Activated CD4-positive, alpha-beta T cell treated with anti-CD3 and anti-CD28 coated beads for 36 hours (primary cell): ENCODE measurements at regions of chr14 and their contacts with region 1.

Region 1: GRCh38 chr14:71555654-71556559 is 376.3 kb upstream of the RGS6 start:
- DNase-seq: peak; percentile 81
- ATAC-seq: peak; percentile 86
- H3K4me3 Mint-ChIP-seq: peak overlapping the region; percentile 50
- H3K27ac Mint-ChIP-seq: peak overlapping the region; percentile 98
- H3K4me1 Mint-ChIP-seq: peaks cover 76% of the 10 kb centered on the region
- H3K27me3 Mint-ChIP-seq: no peaks in the 10 kb centered on the region

Region 2: DNA sequence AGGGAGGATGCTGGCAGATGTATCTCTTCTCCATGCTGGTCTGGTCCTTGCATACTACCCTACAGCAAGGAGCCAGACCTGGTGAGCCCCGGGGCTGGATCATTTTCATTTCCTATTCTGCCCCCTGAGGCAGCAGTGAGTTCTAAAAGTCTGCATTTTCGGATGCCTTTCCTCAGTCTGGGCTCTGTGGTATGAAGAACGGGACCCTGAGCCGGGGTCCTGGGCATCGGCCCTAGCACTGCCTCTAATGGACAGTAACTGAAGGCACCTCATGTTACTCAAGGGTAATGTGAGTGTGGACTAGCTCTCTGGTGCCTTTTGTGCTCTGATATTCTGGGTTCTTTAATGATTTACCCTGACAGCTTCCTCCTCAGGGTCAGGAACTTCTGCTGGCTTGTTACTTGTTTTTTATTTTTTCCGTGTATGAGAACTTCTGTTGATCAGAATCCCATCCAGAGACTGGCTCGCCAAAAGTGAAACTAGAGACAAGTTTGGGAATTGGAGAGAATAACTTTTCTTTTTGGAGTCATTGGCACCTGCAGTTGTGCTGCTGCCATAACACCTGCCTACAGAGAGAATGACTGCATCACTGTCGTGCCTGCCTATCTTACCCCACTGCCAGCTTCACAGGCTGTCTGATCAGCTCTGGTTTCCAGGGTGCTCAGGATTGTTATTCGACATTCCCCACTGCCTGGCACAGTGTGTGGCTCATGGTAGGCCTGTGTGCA is 1882.2 kb before region 1 on chr14:
- CTCF ChIA-PET with region 1: no interaction called
- POLR2A ChIA-PET with region 1: no interaction called
- intact Hi-C with region 1: loop called in 1 of 2 experiments (anchors 10 kb)
- DNase-seq: peak; percentile 40
- ATAC-seq: no peak
- H3K4me3 Mint-ChIP-seq: peak overlapping the region; percentile 60
- H3K27ac Mint-ChIP-seq: peak overlapping the region; percentile 99
- H3K4me1 Mint-ChIP-seq: peaks cover 95% of the 10 kb centered on the region
- H3K27me3 Mint-ChIP-seq: no peaks in the 10 kb centered on the region

Region 3: GRCh38 chr14:71203306-71203705 is 352.6 kb before region 1 on chr14:
- CTCF ChIA-PET with region 1: no interaction called
- POLR2A ChIA-PET with region 1: no interaction called
- intact Hi-C with region 1: no loop called
- DNase-seq: no peak
- ATAC-seq: no peak
- H3K4me3 Mint-ChIP-seq: no peak overlapping the region
- H3K27ac Mint-ChIP-seq: no peak overlapping the region
- H3K4me1 Mint-ChIP-seq: peaks cover 2% of the 10 kb centered on the region
- H3K27me3 Mint-ChIP-seq: peaks cover 8% of the 10 kb centered on the region

Region 4: DNA sequence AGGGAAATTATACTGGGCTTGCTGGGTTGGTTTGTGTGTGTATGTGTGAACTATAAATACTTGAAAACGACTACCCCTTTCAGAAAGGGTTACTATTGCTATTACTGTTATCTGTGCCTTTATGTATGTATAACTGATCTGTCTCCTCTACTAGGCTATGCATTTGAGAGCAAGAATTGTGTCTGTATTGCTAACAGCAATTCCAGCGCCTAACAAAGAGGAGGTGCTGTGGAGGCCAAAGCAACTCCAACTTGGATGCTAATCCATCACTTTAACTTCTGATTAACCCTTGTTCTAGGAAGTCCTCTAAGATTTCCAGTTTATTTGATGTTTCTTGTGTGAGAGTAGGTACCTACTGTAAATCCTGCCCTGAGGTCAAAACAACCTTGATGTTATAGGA is 334.8 kb before region 1 on chr14:
- CTCF ChIA-PET with region 1: no interaction called
- POLR2A ChIA-PET with region 1: no interaction called
- intact Hi-C with region 1: loop called in 1 of 2 experiments (anchors 1 kb)
- DNase-seq: no peak
- ATAC-seq: no peak
- H3K4me3 Mint-ChIP-seq: no peak overlapping the region
- H3K27ac Mint-ChIP-seq: no peak overlapping the region
- H3K4me1 Mint-ChIP-seq: peaks cover 15% of the 10 kb centered on the region
- H3K27me3 Mint-ChIP-seq: no peaks in the 10 kb centered on the region

Region 5: DNA sequence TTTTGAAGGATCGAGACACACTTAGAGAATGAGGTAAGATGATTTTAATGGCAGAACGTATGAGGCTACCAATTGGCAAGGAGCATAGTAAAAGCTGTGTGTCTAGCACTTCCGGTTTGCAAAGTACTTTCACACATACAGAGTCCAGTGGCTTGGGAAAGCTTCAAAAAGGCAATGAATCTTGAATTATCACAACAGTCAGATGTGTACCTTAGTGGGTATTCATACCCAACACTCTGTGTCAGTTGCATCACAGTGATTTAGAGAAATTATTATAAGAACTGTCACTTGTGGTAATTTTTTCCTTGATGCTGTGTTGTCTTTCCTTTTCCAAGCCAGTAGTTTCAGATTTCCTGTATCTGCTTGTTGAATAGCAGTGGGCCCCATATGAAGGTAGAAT is 224.5 kb before region 1 on chr14:
- CTCF ChIA-PET with region 1: no interaction called
- POLR2A ChIA-PET with region 1: interaction called, 6 read pairs
- intact Hi-C with region 1: loop called in 1 of 2 experiments (anchors 1 kb)
- DNase-seq: no peak
- ATAC-seq: peak; percentile 17
- H3K4me3 Mint-ChIP-seq: no peak overlapping the region
- H3K27ac Mint-ChIP-seq: peak overlapping the region; percentile 69
- H3K4me1 Mint-ChIP-seq: peaks cover 70% of the 10 kb centered on the region
- H3K27me3 Mint-ChIP-seq: no peaks in the 10 kb centered on the region

Region 6: DNA sequence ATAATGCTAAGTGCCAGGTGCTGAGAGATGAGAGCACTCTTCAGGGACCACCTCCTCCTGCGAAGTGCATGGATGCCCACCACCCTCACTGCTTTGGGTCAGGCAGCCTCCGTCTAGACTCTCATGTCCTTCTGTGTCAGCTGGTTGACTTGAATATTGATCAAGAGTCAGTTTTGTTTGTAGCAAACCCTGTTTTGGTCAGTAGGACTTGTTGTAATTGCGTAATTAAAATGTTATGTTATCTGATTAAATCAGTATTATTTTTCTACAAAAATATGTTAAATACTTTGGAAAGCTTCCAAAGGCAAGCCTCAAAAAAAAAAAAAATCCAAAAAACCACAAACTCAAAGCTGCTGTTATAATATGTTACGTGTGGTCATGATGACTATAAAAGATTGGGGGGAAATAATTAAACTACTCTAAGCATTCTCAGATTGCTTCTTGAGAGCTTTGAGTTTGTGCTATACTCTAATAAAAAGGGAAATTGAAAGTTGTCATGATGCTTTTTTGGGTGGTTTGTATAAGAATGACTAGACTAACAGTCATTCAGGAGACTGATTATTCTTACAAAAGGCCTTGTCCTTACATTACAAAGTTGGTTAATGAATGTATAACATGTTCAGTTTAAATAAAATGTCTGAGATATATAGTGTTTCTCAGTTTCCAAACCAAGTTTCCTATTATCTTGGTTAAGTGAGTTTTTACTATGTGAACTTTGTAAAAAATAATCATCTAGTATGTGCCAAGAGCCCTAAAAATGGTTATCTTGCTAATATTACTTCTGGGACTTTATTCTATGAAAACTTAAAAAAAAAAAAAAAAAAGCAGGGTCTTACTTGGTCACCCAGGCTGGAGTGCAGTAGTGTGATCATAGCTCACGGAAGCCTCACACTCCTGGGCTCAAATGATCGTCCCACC is 83.6 kb before region 1 on chr14:
- CTCF ChIA-PET with region 1: interaction called, 4 read pairs
- POLR2A ChIA-PET with region 1: no interaction called
- intact Hi-C with region 1: loop called (anchors 1 kb)
- DNase-seq: no peak
- ATAC-seq: peak; percentile 79
- H3K4me3 Mint-ChIP-seq: no peak overlapping the region
- H3K27ac Mint-ChIP-seq: no peak overlapping the region
- H3K4me1 Mint-ChIP-seq: peaks cover 41% of the 10 kb centered on the region
- H3K27me3 Mint-ChIP-seq: no peaks in the 10 kb centered on the region

Region 7: DNA sequence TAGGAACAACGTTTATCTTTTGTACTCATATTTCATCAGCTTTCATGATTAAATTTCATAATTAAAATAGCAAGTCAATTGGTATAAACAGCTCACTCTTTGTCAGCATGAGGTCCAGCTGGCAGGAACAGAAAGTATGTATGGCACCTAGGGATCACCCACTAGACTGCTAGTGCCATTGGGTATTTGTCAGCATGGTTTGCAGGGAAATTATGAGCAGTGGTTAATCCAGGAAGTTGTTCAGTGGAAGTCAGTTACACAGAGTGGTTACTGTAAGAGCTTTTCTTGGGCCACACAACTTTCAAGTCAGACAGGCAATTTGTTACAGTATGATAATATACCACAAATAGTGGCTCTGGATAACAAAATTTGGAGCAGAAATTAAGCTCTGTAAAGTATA is 36.0 kb after region 1 on chr14:
- CTCF ChIA-PET with region 1: interaction called, 5 read pairs
- POLR2A ChIA-PET with region 1: interaction called, 11 read pairs
- intact Hi-C with region 1: loop called (anchors 1 kb)
- DNase-seq: peak; percentile 52
- ATAC-seq: peak; percentile 93
- H3K4me3 Mint-ChIP-seq: no peak overlapping the region
- H3K27ac Mint-ChIP-seq: no peak overlapping the region
- H3K4me1 Mint-ChIP-seq: peaks cover 50% of the 10 kb centered on the region
- H3K27me3 Mint-ChIP-seq: no peaks in the 10 kb centered on the region

Region 8: DNA sequence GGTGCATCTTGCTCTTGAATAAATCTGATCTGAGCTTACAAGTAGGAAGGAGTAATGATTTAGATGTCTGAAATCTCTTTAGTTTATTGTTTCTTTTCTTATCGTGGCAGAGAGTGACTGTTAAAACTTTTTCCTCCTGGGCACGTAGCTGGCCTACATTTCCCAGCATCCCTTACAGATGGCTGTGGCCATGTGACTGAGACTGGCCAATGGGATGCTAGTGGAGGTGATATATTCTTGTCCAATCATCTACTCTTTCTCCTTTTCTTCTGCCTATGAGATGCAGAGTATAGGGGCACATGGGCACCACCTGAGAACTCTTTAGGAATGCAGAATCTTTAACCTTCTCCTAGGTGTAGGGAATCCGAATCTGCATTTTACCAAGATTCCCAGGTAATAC is 613.6 kb after region 1 on chr14:
- CTCF ChIA-PET with region 1: no interaction called
- POLR2A ChIA-PET with region 1: no interaction called
- intact Hi-C with region 1: no loop called
- DNase-seq: peak; percentile 19
- ATAC-seq: peak; percentile 47
- H3K4me3 Mint-ChIP-seq: no peak overlapping the region
- H3K27ac Mint-ChIP-seq: no peak overlapping the region
- H3K4me1 Mint-ChIP-seq: peaks cover under 1% of the 10 kb centered on the region
- H3K27me3 Mint-ChIP-seq: peaks cover 6% of the 10 kb centered on the region